ENCODE measurements at regions of chr13 and their contacts with region 1.

Region 1: GRCh38 chr13:114226699-114227323 is 7.9 kb upstream of the CDC16 start:
- DNase-seq: peak; percentile 77 to 92 (median 86)
- H3K4me3 ChIP-seq: peak overlapping the region in 4 of 59 donors; percentile 9 to 40 (median 21)
- H3K27ac ChIP-seq: peak overlapping the region in 19 of 59 donors; percentile 1 to 78 (median 57)
- H3K27me3 ChIP-seq: peaks cover 0 to 28% (median 0%) of the 10 kb centered on the region in 45 donors
- CTCF ChIP-seq: peak; percentile 80 to 96 (median 90)

Region 2: DNA sequence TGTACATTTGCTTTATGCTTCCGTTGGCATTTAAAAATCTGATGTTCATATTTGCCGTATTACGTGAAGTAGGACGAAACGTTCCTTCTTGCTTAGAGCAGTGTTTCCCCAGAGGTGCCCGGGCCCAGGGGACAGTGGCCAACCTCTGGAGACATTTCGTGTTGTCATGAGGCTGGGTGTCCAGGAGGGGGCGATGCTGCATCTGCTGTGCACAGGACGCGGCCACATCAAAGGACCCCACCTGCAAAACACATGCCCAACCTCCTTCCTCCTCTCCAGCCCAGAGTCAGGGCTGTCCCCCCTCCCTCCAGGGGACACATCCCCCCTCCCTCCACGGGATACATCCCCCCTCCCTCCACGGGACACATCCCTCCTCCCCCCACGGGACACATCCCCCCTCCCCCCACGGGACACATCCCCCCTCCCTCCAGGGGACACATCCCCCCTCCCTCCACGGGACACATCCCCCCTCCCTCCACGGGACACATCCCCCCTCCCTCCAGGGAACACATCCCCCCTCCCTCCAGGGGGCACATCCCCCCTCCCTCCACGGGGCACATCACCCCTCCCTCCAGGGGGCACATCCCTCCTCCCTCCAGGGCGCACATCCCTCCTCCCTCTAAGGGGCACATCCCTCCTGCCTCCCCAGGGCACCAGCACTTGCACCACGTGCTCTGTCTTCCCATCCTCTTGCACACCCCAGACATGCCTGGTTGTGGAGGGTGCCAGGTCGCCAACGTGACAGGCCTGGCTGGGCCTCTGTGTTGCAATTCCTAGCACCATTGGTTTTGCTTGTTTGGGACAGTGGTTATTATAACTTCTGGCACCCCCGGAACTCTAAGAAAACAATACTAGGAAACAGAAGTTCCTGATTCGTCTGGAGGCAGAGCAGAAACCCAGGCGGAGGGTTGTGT is 409.6 kb before region 1 on chr13:
- intact Hi-C with region 1: loop called (anchors 2 kb)
- DNase-seq: peak; percentile 54 to 85 (median 80)
- H3K4me3 ChIP-seq: peak overlapping the region in 6 of 59 donors; percentile 1 to 35 (median 12)
- H3K27ac ChIP-seq: peak overlapping the region in 17 of 59 donors; percentile 1 to 58 (median 37)
- H3K27me3 ChIP-seq: no peaks in the 10 kb centered on the region
- CTCF ChIP-seq: peak; percentile 76 to 95 (median 88)

Region 3: GRCh38 chr13:113951246-113951999 is 275.4 kb before region 1 on chr13:
- intact Hi-C with region 1: loop called (anchors 2 kb)
- DNase-seq: peak in 9 of 10 donors; percentile 58 to 79 (median 68)
- H3K4me3 ChIP-seq: peak overlapping the region in 8 of 59 donors; percentile 12 to 32 (median 19)
- H3K27ac ChIP-seq: peak overlapping the region in 5 of 59 donors; percentile 11 to 53 (median 15)
- H3K27me3 ChIP-seq: no peaks in the 10 kb centered on the region
- CTCF ChIP-seq: peak in 55 of 56 donors; percentile 39 to 89 (median 71)

Region 4: DNA sequence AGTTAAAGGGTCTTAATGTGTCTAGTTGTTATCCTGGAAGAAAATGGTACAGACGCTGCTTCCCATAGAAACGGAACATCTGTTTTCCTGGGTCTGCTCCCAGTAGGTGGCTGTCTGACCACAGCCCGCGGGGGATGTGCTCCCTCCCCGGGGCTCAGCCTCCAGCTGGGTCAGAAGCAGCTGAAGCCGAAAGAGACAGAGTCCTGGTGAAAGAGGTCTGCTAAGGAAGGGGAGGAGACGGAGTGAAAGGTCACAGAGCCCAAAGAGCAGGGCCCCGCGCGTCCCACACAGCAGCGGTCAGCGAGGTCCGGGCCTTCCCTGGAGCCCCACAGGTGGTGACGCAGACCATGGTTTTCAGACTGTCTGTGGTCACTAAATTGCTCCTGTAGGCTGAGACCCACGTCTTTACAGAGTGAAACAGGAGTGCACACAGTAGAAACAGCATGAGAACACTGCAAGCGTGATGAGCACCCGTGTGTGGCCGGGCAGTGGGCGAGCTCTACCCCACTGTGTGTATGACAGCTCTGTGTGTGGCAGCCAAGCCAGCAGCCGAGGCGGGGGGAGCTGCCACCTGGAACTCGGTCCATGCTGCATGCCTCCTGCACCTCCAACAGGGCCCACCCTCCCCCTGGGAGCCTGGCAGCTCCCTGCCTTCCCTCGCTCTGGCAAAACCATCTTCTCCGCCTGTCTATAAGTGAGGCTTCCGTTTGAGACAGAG is 200.9 kb before region 1 on chr13:
- intact Hi-C with region 1: loop called (anchors 2 to 5 kb)
- DNase-seq: peak in 4 of 10 donors; percentile 59 to 80 (median 74)
- H3K4me3 ChIP-seq: peak overlapping the region in 4 of 59 donors; percentile 5 to 30 (median 10)
- H3K27ac ChIP-seq: peak overlapping the region in 54 of 59 donors; percentile 16 to 87 (median 68)
- H3K27me3 ChIP-seq: no peaks in the 10 kb centered on the region
- CTCF ChIP-seq: peak in 35 of 56 donors; percentile 4 to 54 (median 32)

Region 5: DNA sequence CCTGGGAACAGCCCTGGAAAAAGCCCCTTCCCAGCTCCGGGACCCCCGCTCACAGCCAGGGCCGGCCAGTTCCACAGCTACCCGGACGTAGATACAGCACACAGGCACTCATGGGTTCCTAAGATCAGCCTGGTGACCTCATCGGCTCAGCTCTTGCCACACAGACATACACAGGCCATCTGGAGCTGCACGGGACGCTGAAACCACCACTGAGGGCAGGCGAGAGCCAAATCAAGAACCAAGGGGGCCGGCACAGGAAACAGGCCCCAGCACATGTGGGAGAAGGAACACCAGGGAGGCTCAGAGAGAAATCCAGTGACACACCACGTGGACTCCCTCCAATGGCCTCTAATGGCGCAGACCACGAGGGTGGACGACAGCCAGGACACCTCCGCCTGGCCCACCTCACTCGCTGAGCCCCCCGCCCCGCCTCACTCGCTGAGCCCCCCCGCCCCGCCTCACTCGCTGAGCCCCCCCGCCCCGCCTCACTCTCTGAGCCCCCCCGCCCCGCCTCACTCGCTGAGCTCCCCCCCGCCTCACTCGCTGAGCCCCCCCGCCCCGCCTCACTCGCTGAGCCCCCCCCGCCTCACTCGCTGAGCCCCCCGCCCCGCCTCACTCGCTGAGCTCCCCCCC is 183.3 kb before region 1 on chr13:
- intact Hi-C with region 1: loop called in 1 of 2 experiments (anchors 5 kb)
- DNase-seq: peak in 1 of 10 donors; percentile 30
- H3K4me3 ChIP-seq: peak overlapping the region in 1 of 59 donors; percentile 38
- H3K27ac ChIP-seq: peak overlapping the region in 43 of 59 donors; percentile 5 to 80 (median 53)
- H3K27me3 ChIP-seq: no peaks in the 10 kb centered on the region
- CTCF ChIP-seq: no peak

Region 6: GRCh38 chr13:114132419-114133121 is 94.2 kb before region 1 on chr13 and contains the start of gene RASA3:
- intact Hi-C with region 1: loop called in 1 of 2 experiments (anchors 5 kb)
- DNase-seq: peak in 7 of 10 donors; percentile 53 to 86 (median 71)
- H3K4me3 ChIP-seq: peak within 1 kb of the TSS; percentile 49 to 93 (median 83)
- H3K27ac ChIP-seq: peak within 1 kb of the TSS; percentile 5 to 92 (median 80)
- H3K27me3 ChIP-seq: no peaks in the 10 kb centered on the region
- CTCF ChIP-seq: no peak
- total RNA-seq, gene RASA3: 31.0 to 93.4 (median 44.7) TPM

Measured in dorsolateral prefrontal cortex (tissue), 120 donors.